Aorta (tissue), 5 donors: ENCODE measurements at regions of chr20 and their contacts with region 1.

Region 1: DNA sequence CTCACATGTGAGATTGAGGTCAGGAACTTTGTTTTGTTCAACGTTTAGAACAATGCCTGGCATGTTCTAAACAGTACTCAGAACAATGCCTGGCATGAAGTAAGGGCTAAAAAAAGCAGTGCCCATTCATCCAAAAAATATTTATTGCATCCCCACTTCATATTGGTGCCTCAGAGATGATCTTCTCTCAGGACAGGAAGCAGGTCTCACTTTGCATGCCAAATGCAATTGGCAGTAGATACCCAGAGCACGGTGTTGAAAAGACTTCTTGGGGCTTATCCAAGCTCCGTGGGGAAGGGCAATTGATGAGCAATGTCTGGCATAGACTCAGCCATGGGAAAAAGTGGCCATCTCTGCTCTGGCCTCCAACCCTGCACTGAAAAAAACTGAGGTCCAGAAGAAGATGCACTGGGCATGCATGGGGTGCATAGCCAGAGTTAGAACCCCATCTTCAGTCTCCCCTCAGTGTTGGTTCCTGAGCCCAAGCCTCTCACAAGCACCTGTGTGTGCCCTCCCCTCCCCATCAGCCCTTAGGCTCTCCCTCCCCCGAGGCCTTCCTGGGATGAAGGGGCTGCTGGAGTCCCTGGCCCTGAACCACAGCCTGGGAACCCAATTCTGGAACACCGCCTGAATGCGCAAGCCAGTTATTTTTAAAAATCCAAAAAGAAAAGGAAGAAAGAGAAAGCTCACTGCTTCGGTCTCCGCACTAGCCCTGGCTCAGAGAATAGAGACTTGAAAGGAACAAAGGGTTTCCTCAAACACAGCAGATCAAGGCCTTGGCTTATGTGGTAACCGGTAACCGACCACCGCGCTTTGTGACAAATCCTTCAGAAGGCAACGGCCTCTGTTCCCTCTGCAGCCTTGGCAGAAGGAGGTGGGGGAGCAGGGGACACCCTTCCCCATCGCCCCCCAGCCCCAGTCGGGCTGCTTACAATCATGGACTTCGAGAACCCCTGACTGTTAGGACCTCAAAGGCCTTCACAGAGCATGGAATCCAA is 78.5 kb upstream of the SIRPA start:
- DNase-seq: no peak
- ATAC-seq: peak; percentile 31
- H3K4me3 ChIP-seq: no peak overlapping the region
- H3K27ac ChIP-seq: peak overlapping the region; percentile 79 to 95
- H3K4me1 ChIP-seq: peaks cover 0 to 8% of the 10 kb centered on the region in 2 donors
- H3K27me3 ChIP-seq: no peaks in the 10 kb centered on the region

Region 2: GRCh38 chr20:1776681-1777475 is 39.8 kb before region 1 on chr20:
- intact Hi-C with region 1: no loop called
- DNase-seq: peak; percentile 91 to 96
- ATAC-seq: peak; percentile 97
- H3K4me3 ChIP-seq: peak overlapping the region; percentile 51 to 67
- H3K27ac ChIP-seq: no peak overlapping the region
- H3K4me1 ChIP-seq: no peaks in the 10 kb centered on the region
- H3K27me3 ChIP-seq: no peaks in the 10 kb centered on the region

Region 3: GRCh38 chr20:2101865-2102584 is 285.3 kb after region 1 on chr20:
- intact Hi-C with region 1: loop called in 1 of 2 experiments (anchors 10 kb)
- DNase-seq: peak; percentile 95 to 97
- ATAC-seq: peak; percentile 97
- H3K4me3 ChIP-seq: peak overlapping the region; percentile 52 to 67
- H3K27ac ChIP-seq: peak overlapping the region; percentile 58 to 92
- H3K4me1 ChIP-seq: peaks cover 2 to 12% of the 10 kb centered on the region in 2 donors
- H3K27me3 ChIP-seq: no peaks in the 10 kb centered on the region

Region 4: DNA sequence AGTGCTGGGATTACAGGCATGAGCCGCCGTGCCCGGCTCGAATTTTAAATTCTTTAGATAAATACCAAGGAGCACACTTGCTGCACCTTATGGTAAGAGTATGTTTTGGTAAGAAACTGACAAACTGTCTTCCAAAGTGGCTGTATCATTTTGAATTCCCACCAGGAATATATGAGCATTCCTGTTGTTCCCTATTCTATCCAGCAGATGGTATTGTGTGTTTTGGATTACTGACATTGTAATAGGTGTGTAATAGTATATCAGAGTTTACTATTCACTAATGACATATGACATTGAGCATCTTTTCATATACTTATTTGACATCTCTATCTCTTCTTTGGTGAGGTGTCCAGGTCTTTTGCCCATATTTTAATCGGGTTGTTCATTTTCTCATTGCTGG is 604.6 kb after region 1 on chr20:
- intact Hi-C with region 1: no loop called
- DNase-seq: no peak
- ATAC-seq: no peak
- H3K4me3 ChIP-seq: no peak overlapping the region
- H3K27ac ChIP-seq: no peak overlapping the region
- H3K4me1 ChIP-seq: no peaks in the 10 kb centered on the region
- H3K27me3 ChIP-seq: no peaks in the 10 kb centered on the region